Activated T-helper 1 cell treated with anti-CD3 and anti-CD28 coated beads, Interleukin-12 subunit alpha, Interleukin-12 subunit beta, Interleukin-2, Interleukin-4 antibody, amounts not matched to agents 30 ng/mL and 10 ng/mL and 1 ng/mL, durations not matched to agents 14 hours and 24 hours and 36 hours (primary cell): ENCODE measurements at regions of chrX and their contacts with region 1.

Region 1: DNA sequence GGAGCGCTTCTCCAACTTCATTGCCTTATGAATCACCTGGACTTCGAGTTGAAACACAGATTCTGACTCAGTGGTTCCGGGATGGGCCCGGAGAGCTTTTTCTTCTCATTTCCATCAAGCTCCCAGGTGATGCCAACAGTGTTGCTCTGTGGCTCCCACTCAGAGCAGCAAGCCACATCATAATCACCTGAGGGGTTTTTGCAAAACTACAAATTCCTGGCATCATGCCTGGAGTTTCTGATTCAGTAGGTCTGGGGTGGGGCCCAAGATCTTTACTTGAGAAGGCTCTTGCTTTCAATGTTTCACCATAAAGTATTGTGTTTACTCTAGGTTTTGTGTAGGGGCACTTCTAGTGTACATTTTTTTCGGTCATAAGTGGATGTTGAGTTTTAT is 7.0 kb downstream of the MTM1 start:
- DNase-seq: peak; percentile 16
- H3K4me3 Mint-ChIP-seq: peak overlapping the region; percentile 76
- H3K27ac Mint-ChIP-seq: peak overlapping the region; percentile 93
- H3K4me1 Mint-ChIP-seq: peaks cover 80% of the 10 kb centered on the region
- H3K27me3 Mint-ChIP-seq: no peaks in the 10 kb centered on the region

Region 2: GRCh38 chrX:149938427-149939270 is 636.8 kb before region 1 on chrX and contains the start of gene EOLA2:
- intact Hi-C with region 1: loop called (anchors 10 kb)
- DNase-seq: peak; percentile 89
- H3K4me3 Mint-ChIP-seq: peak within 1 kb of the TSS; percentile 92
- H3K27ac Mint-ChIP-seq: peak within 1 kb of the TSS; percentile 100
- H3K4me1 Mint-ChIP-seq: peaks cover 4% of the 10 kb centered on the region
- H3K27me3 Mint-ChIP-seq: no peaks in the 10 kb centered on the region
- total RNA-seq, gene EOLA2: 54.2 and 63.3 TPM in 2 replicates

Region 3: GRCh38 chrX:150200820-150201287 is 374.6 kb before region 1 on chrX:
- intact Hi-C with region 1: loop called (anchors 1 kb)
- DNase-seq: peak; percentile 40
- H3K4me3 Mint-ChIP-seq: peak overlapping the region; percentile 26
- H3K27ac Mint-ChIP-seq: no peak overlapping the region
- H3K4me1 Mint-ChIP-seq: peaks cover 10% of the 10 kb centered on the region
- H3K27me3 Mint-ChIP-seq: peaks cover 2% of the 10 kb centered on the region

Region 4: DNA sequence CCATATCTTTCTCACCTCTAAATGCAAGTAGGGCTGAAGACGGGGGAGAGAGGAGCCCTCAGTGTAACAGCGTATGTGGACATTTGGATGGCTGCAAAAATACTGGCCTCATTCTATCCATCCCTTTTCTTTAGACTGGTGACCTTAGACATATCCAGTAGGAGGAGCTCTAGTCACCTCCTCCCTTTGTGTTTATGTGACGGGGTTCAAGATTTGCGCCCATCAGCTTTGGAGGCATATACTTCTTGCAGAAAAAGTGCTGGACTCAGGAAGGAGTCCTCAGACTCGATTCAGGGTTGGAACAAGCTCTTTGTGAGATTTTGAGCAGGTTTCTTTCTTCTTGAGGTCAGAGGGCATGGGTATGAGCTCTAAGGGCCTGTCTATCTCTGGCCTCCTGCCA is 126.1 kb before region 1 on chrX:
- intact Hi-C with region 1: loop called (anchors 10 kb)
- DNase-seq: no peak
- H3K4me3 Mint-ChIP-seq: no peak overlapping the region
- H3K27ac Mint-ChIP-seq: no peak overlapping the region
- H3K4me1 Mint-ChIP-seq: peaks cover 28% of the 10 kb centered on the region
- H3K27me3 Mint-ChIP-seq: no peaks in the 10 kb centered on the region

Region 5: DNA sequence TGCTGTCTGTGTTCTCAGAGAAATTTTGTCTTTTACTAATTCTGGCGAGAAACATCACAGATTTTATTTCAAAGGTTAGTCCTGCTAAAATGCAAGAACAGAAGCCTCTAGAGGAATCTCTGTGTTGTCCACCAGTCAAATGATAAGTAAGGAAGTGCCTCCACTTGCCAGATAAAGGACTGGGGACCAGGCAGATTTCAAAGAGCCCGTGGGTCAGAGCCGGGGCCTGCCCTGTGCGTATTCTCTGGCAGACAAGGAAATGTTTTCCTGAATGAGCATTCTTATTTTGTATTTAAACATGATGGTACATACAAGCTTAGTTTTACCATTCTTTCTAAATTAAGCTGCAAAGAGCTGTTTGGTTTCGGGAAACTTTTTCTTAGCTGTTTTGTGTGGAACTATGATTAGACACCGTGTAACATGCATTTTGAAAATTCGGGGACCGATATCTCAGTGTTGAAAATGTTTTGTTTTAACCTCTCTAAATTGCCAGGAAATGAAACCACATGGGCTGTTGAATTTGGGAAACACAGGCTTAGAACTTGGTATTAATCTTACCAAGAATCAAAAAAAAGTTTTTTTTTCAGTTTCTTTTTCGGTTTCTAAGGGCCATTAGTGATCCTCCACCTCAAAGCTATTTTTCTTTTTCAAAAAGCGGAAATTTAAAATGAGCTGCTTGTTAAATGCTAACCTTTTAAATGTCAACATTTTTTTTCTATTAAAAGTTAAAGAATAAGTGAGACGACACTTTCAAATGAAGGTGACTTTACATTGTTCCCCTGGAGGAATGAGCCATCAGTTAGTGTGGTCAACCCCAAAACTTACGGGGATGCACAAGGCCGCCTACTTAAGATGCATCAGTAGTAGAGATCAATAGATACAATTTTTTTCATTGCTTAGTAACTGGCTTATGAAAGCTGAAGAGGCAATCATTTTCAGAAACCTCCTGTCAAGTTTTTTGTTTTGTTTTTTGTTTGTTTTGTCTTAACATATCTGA is 96.6 kb before region 1 on chrX:
- intact Hi-C with region 1: loop called (anchors 1 kb)
- DNase-seq: peak; percentile 21
- H3K4me3 Mint-ChIP-seq: peak overlapping the region; percentile 66
- H3K27ac Mint-ChIP-seq: peak overlapping the region; percentile 95
- H3K4me1 Mint-ChIP-seq: peaks cover 75% of the 10 kb centered on the region
- H3K27me3 Mint-ChIP-seq: no peaks in the 10 kb centered on the region

Region 6: DNA sequence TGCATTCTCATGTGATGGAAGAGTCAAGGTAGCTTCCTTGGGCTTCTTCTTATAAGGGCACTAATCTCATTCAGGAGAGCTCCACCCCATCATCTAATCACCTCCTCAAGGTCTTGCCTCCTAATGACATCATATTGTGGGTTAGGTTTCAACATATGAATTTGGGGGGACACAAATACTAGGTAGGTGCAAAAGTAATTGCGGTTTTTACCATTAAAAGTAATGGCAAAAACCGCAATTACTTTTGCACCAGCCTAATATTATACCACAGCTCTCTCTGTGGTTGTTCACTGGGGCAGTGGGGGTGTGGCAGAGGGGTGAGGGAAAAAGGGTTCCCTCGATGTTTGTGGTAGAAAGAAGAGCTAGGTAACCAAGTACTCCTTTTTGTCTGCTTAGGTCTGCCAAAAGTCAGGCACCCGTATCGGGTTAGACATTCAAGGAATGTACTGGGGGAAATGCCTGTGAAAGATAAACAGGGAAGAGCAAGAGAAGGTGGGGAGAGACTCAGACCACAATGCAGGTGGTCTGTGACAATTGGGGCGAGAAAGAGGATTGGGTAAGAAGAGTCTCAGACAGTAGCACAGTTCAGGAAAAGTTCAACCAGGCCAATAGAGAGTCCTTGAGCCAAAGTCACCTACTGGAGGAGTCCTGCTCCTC is 85.9 kb before region 1 on chrX:
- intact Hi-C with region 1: no loop called
- DNase-seq: no peak
- H3K4me3 Mint-ChIP-seq: no peak overlapping the region
- H3K27ac Mint-ChIP-seq: no peak overlapping the region
- H3K4me1 Mint-ChIP-seq: peaks cover 22% of the 10 kb centered on the region
- H3K27me3 Mint-ChIP-seq: no peaks in the 10 kb centered on the region

Region 7: DNA sequence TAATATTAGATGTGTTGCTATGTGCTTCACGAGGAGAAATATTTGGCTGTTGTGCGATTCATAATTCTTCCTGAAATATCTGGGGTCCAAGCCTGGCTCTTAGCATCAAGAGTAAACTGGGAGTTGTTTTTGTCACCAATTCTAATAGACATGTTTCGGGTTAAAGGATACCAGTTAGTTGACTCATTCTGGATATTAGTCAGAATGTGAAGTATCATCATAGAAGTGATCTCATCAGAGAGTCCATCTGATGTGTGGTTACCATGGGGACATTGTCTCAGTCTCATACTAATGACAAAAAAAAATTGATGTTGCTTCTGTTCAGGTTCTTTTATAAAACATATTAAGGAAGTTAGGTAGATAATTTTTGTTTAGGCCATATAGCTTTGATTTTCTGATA is 60.5 kb after region 1 on chrX:
- intact Hi-C with region 1: loop called (anchors 1 kb)
- DNase-seq: no peak
- H3K4me3 Mint-ChIP-seq: no peak overlapping the region
- H3K27ac Mint-ChIP-seq: peak overlapping the region; percentile 78
- H3K4me1 Mint-ChIP-seq: peaks cover 7% of the 10 kb centered on the region
- H3K27me3 Mint-ChIP-seq: no peaks in the 10 kb centered on the region